GM23248 (cell line): ENCODE measurements at regions of chr1 and their contacts with region 1.

Region 1: GRCh38 chr1:154884869-154885701 is 15.0 kb upstream of the KCNN3 start:
- DNase-seq: no peak
- H3K4me3 ChIP-seq: no peak overlapping the region
- H3K27ac ChIP-seq: no peak overlapping the region
- H3K4me1 ChIP-seq: no peaks in the 10 kb centered on the region
- H3K27me3 ChIP-seq: no peaks in the 10 kb centered on the region; the same call in 1 of the 2 replicates

Region 2: GRCh38 chr1:154479764-154480421 is 405.2 kb before region 1 on chr1:
- in situ Hi-C with region 1: loop called (anchors 10 kb)
- DNase-seq: peak; percentile 83
- H3K4me3 ChIP-seq: no peak overlapping the region
- H3K27ac ChIP-seq: no peak overlapping the region
- H3K4me1 ChIP-seq: peaks cover 4% of the 10 kb centered on the region; the same call in 1 of the 2 replicates
- H3K27me3 ChIP-seq: no peaks in the 10 kb centered on the region

Region 3: GRCh38 chr1:154559466-154560088 is 325.5 kb before region 1 on chr1:
- in situ Hi-C with region 1: loop called (anchors 10 kb)
- DNase-seq: peak; percentile 94
- H3K4me3 ChIP-seq: peak overlapping the region; percentile 100
- H3K27ac ChIP-seq: peak overlapping the region; percentile 82
- H3K4me1 ChIP-seq: peaks cover 12% of the 10 kb centered on the region
- H3K27me3 ChIP-seq: no peaks in the 10 kb centered on the region

Region 4: DNA sequence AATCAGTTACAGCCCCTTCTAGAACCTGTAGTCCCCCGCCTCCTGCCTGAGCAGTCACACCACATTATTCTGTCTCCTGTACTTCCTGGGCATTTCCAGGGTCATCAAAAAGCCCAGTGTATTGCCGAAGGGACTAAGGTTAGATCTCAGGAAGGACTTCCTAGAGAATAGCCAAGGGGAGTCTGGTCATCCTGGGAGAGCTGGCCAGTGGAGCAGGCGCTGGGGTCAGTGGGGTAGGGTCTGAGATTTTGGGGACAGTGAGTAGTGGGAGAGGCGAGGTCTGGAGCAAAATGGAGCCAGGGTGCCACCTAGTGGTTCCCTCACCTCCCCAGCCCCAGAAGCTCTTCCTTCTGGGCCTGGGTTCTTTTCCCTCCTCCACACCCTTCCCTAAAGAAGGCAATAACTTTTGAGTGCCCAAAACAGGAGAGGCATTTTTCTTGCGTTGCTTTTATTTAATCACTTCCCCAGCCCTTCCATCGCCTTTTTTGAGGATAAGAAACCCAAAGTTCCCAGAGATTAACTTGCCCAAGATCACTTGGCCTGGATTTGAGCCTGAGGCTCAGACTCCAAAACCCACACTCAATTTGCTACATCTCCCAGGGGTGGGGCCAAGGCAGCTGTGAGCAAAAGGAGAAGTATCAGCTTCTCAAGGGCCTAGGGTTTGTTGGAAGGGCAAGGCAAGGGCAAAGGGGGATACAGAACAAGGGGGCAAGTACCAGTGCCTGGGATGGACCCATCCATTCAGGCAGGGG is 58.7 kb after region 1 on chr1:
- in situ Hi-C with region 1: no loop called
- DNase-seq: peak; percentile 48
- H3K4me3 ChIP-seq: no peak overlapping the region
- H3K27ac ChIP-seq: no peak overlapping the region
- H3K4me1 ChIP-seq: no peaks in the 10 kb centered on the region
- H3K27me3 ChIP-seq: no peaks in the 10 kb centered on the region

Region 5: GRCh38 chr1:155195201-155196102 is 310.4 kb after region 1 on chr1:
- in situ Hi-C with region 1: no loop called
- DNase-seq: peak; percentile 57
- H3K4me3 ChIP-seq: peak overlapping the region; percentile 82
- H3K27ac ChIP-seq: peak overlapping the region; percentile 92
- H3K4me1 ChIP-seq: peaks cover 16% of the 10 kb centered on the region
- H3K27me3 ChIP-seq: no peaks in the 10 kb centered on the region